Esophagus muscularis mucosa (tissue), 4 donors: ENCODE measurements at regions of chr12 and their contacts with region 1.

Region 1: GRCh38 chr12:100348657-100349454 is 8.0 kb upstream of the SLC17A8 start:
- DNase-seq: no peak
- H3K4me3 ChIP-seq: no peak overlapping the region
- H3K27ac ChIP-seq: no peak overlapping the region
- H3K4me1 ChIP-seq: no peaks in the 10 kb centered on the region
- H3K27me3 ChIP-seq: peaks cover 0 to 5% (median 0%) of the 10 kb centered on the region in 4 donors
- CTCF ChIP-seq: peak; percentile 27 to 42 (median 38)
- EP300 ChIP-seq: no peak
- POLR2A ChIP-seq: no peak

Region 2: GRCh38 chr12:99746538-99746937 is 602.3 kb before region 1 on chr12:
- intact Hi-C with region 1: no loop called
- DNase-seq: no peak
- H3K4me3 ChIP-seq: no peak overlapping the region
- H3K27ac ChIP-seq: no peak overlapping the region
- H3K4me1 ChIP-seq: peaks cover 0 to 12% (median 2%) of the 10 kb centered on the region in 4 donors
- H3K27me3 ChIP-seq: no peaks in the 10 kb centered on the region
- CTCF ChIP-seq: no peak
- EP300 ChIP-seq: no peak
- POLR2A ChIP-seq: no peak

Region 3: GRCh38 chr12:100234598-100235304 is 114.1 kb before region 1 on chr12:
- intact Hi-C with region 1: loop called (anchors 10 kb)
- DNase-seq: no peak
- H3K4me3 ChIP-seq: no peak overlapping the region
- H3K27ac ChIP-seq: peak overlapping the region in 1 of 4 donors; percentile 57
- H3K4me1 ChIP-seq: peaks cover 0 to 11% (median 7%) of the 10 kb centered on the region in 4 donors
- H3K27me3 ChIP-seq: no peaks in the 10 kb centered on the region
- CTCF ChIP-seq: peak; percentile 65 to 83 (median 68)
- EP300 ChIP-seq: no peak
- POLR2A ChIP-seq: no peak

Region 4: DNA sequence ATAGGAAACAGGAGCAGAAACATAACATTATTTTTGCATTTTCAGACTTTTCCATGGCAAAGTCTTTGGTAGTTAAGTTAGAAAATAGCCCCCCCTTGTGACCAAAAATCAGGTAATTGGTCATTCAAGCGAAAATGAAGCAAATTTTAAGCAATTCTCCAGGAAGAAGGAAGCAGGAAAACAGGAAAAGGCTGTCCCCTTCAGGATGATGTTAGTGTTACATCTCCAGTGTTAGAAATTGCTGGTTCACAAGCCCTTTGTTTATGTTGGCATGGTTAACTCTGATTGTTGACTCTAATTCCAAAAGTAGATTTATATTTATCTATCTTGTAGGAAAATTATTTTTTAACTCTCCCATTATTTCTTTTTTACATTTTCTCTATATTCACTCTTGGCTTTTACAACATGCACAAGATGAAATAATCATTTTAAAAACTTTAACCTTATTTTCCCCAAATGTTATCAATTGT is 205.8 kb after region 1 on chr12:
- intact Hi-C with region 1: loop called (anchors 5 kb)
- DNase-seq: no peak
- H3K4me3 ChIP-seq: no peak overlapping the region
- H3K27ac ChIP-seq: no peak overlapping the region
- H3K4me1 ChIP-seq: peaks cover 0 to 7% (median 3%) of the 10 kb centered on the region in 4 donors
- H3K27me3 ChIP-seq: no peaks in the 10 kb centered on the region
- CTCF ChIP-seq: peak; percentile 70 to 83 (median 79)
- EP300 ChIP-seq: no peak
- POLR2A ChIP-seq: no peak